ENCODE measurements at regions of chr11 and their contacts with region 1.

Region 1: DNA sequence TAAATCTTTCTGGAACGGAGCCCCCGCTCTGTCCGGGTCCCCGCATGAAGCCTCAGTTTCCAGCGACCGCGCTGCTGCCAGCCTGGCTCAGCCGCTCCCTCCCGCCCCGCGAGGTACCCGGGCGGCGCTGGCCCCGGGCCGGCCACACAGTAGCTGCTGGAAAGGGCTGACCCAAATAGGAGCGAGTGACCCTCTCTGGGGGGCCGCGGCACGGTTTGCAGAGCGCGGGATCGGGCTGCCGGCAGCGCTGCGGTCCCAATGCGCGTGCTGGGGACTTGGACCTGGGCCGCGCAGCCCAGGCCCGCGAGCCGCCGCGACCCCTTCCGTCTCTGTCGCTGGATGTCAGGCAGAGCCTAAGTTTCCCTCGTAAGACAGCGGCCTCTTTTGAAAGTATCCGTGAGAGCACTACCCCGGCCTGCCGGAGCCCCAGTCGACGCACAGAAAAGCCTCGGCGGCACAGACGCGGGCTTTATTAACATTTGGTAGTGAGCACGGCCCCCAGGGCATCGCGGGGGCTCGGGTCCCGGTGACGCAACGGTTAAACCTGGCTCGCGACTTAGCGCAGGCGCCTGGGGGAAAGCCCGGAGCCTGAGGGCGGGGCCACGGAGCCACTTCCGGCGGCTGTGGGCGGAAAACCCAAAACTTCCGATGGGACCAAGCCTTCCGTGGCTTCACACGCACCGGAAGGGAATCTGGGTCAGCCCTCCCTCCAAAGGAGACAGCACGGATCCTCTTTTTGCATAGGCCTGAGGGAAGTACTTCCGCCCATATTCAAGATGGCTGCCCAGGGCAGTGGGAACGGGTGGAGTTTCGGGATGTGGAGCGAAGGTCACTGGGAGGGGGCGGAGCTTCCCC is 14.9 kb downstream of the BAD start:
- DNase-seq: peak; percentile 86
- H3K4me3 ChIP-seq: peak overlapping the region; percentile 60 to 76
- H3K27ac ChIP-seq: peak overlapping the region; percentile 97 to 99
- H3K4me1 ChIP-seq: peaks cover 12 to 42% of the 10 kb centered on the region in 2 experiments; a peak in 2 of 4 replicates
- H3K27me3 ChIP-seq: no peaks in the 10 kb centered on the region
- CTCF ChIP-seq: 0 out of 2 replicates have a peak, but pooled peaks have one; percentile 14
- EP300 ChIP-seq: no peak; a peak in 1 of 4 replicates
- RAD21 ChIP-seq: peak; percentile 44

Region 2: DNA sequence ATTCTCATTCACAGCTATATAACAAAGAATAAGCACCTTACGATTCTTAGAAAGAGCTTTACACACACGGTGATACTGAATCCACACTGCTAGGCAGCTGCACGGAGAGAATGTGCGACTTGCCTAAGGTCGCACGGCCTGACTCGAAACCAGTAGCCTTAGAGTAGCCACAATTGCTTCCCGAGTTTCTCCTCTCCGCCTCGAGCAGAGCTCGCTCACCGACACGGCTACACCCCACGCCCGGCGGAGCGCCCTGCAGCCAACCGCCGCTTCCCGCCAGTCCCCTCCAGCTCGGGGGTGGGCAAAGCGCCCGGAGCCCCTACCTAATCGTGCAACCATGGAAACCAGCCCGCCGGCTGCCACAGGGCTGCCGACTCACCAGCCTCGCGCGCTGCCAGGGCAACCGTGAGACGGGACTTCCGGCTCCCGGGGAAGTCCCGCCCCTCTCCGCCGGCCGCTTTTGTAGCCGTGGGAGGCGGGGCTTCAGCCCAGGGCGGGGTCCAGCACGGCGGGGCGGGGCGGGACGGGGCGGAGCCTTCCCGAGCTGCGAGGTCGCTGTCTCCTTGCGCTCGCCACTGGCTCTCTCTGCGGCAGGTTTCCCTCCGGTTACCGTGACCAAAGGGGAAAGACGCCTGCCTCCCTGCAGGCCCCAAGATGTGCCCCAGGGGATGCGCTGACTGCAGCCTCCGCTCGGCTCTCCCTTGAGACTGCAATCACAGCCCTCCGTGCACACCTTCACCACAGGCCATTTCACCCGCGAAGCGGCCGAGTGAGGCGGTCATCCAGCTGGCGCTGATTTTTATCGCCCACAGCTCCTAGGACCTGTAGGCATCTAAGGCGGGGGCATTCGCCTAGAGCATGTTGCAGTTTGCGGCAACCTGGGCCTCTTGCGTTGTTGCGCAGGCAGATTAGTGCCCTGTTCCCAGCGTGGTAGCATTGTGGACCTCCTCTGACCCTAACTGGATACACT is 1563.4 kb before region 1 on chr11:
- CTCF ChIA-PET with region 1: no interaction called
- POLR2A ChIA-PET with region 1: no interaction called
- DNase-seq: peak; percentile 97
- H3K4me3 ChIP-seq: peak overlapping the region; percentile 67 to 70
- H3K27ac ChIP-seq: peak overlapping the region; percentile 84 to 93
- H3K4me1 ChIP-seq: peaks cover 22 to 45% of the 10 kb centered on the region in 2 experiments; a peak in 3 of 4 replicates
- H3K27me3 ChIP-seq: no peaks in the 10 kb centered on the region
- CTCF ChIP-seq: no peak
- EP300 ChIP-seq: no peak
- RAD21 ChIP-seq: no peak

Region 3: GRCh38 chr11:64204464-64204989 is 65.1 kb before region 1 on chr11:
- CTCF ChIA-PET with region 1: interaction called, 21 read pairs
- POLR2A ChIA-PET with region 1: interaction called, 5 read pairs
- DNase-seq: peak; percentile 89
- H3K4me3 ChIP-seq: no peak overlapping the region
- H3K27ac ChIP-seq: peak overlapping the region in 1 of 2 experiments; percentile 6; a peak in 1 of 4 replicates
- H3K4me1 ChIP-seq: peaks cover 4 to 27% of the 10 kb centered on the region in 2 experiments; a peak in 3 of 4 replicates
- H3K27me3 ChIP-seq: no peaks in the 10 kb centered on the region
- CTCF ChIP-seq: peak; percentile 85
- EP300 ChIP-seq: no peak
- RAD21 ChIP-seq: peak; percentile 84

Region 4: DNA sequence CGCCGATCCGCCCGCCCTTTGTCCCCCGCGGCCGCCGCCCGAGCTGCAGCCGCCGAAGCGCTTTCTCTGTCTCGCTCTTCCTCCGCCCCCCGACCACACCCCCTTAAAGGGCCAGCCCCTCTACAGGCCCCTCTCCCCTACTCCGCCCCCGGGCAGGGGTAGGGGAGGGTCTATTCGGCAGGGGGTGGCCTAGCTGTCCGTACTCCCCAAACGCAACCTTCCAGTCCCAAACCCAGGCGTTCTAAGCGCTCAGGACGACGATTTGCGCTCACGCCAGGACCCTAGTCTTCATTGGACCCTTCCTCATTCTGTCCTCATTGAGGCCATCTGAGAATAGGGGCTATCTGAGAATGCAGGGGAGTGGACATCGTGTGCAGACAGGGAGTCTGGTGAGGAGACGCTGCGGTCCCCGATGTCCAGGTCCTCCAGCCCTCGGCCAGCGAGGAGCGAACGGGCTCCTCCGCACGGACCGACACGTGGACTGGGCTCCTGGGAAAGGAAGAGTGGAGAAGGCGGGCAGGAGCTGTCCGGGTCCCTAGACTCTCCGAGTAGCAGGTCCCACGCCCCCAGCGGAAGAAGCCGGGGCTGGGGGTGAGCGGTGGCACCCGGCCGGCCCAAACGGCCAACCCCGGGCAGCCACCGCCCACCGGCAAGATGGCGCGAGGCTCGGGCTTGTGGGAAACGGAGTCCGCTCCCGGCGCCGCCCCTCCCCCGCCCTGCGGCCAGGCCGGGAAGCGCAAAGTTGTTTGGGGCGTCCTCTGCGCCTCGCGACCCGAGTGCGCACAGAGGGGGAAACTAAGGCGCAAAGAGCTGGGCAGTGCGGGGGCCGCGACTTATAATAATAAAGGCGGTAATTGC is 22.5 kb before region 1 on chr11 and contains the start of gene PPP1R14B:
- CTCF ChIA-PET with region 1: interaction called, 119 read pairs
- POLR2A ChIA-PET with region 1: interaction called, 112 read pairs
- DNase-seq: peak; percentile 95
- H3K4me3 ChIP-seq: peak within 1 kb of the TSS; percentile 92 to 98
- H3K27ac ChIP-seq: peak within 1 kb of the TSS; percentile 96 to 98
- H3K4me1 ChIP-seq: peaks cover 9 to 46% of the 10 kb centered on the region in 2 experiments; a peak in 2 of 4 replicates
- H3K27me3 ChIP-seq: no peaks in the 10 kb centered on the region
- CTCF ChIP-seq: no peak; the same call in 1 of the 2 replicates
- EP300 ChIP-seq: no peak
- RAD21 ChIP-seq: no peak
- polyA plus RNA-seq, gene PPP1R14B: 373 and 523 TPM in 2 replicates

Region 5: DNA sequence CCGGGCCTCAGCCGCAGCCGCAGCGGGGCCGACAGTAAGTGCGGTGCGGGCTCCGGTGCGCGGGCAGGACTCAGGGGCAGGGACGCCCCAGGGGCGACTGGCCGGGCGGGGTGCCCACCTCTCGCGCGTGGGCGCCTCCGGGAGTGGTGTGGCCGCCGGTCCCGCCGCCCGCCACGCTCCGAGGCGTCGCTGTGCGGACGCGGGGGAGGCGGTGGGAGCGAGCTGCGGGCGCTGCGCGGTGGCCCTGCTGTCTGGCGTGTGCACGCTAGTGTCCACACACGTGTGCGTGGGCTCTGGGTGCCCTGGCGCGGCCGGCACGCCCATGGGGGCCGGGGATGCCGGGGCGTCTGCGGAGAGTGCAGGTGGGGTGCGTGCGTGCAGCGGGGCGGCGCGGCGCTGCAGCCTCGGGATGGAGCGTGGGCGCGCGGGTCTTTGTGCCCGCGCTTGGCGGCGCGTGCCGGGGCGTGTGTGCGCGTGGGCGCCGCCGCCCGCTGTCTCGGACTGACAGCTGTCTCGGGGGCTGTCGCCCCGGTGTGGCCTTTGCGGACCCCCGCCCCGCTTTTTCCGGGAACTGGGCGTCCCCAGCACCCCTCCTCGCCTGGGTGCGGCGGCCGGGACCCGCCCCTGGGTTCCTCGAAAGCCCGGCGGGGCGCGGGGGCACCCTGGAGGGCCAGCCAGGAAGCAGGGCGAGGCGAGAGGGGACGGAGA is 22.3 kb after region 1 on chr11:
- CTCF ChIA-PET with region 1: interaction called, 46 read pairs
- POLR2A ChIA-PET with region 1: interaction called, 3 read pairs
- DNase-seq: peak; percentile 68
- H3K4me3 ChIP-seq: peak overlapping the region; percentile 39 to 48; a peak in 3 of 4 replicates
- H3K27ac ChIP-seq: no peak overlapping the region
- H3K4me1 ChIP-seq: peaks cover 0 to 11% of the 10 kb centered on the region in 2 experiments; a peak in 1 of 4 replicates
- H3K27me3 ChIP-seq: peaks cover 20% of the 10 kb centered on the region
- CTCF ChIP-seq: no peak
- EP300 ChIP-seq: no peak
- RAD21 ChIP-seq: no peak

Region 6: DNA sequence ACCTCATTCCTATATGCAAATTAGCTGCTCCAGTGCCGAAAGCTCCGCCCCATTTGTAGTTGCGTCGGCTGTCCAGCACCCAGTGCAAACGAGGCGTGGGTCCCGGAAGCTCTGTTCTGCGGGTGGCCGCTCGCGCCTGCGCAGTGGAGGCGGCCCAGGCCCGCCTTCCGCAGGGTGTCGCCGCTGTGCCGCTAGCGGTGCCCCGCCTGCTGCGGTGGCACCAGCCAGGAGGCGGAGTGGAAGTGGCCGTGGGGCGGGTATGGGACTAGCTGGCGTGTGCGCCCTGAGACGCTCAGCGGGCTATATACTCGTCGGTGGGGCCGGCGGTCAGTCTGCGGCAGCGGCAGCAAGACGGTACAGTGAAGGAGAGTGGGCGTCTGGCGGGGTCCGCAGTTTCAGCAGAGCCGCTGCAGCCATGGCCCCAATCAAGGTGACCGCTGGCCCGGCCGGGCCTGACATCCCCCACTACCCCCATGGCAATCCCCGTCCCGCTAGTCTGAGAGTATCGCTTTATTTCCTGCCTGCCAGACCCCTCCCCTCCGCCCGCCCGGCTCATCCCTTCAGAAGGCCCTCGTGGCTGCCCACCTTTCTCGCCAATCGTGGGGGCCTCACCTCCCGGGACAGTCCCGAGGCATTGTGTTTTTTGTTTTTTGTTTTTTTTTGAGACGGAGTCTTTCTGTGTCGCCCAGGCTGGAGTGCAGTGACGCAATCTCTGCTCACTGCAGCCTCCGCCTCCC is 48.5 kb after region 1 on chr11 and contains the start of gene PRDX5:
- CTCF ChIA-PET with region 1: interaction called, 10 read pairs
- POLR2A ChIA-PET with region 1: interaction called, 14 read pairs
- DNase-seq: peak; percentile 97
- H3K4me3 ChIP-seq: peak within 1 kb of the TSS; percentile 70 to 98
- H3K27ac ChIP-seq: peak within 1 kb of the TSS; percentile 97 to 100
- H3K4me1 ChIP-seq: peaks cover 0 to 15% of the 10 kb centered on the region in 2 experiments; a peak in 2 of 4 replicates
- H3K27me3 ChIP-seq: no peaks in the 10 kb centered on the region
- CTCF ChIP-seq: peak; percentile 33; the same call in 1 of the 2 replicates
- EP300 ChIP-seq: 0 out of 4 replicates have a peak, but pooled peaks of 1 of the 2 experiments have one; percentile 4
- RAD21 ChIP-seq: peak; percentile 55
- polyA plus RNA-seq, gene PRDX5: 875 and 1,000 TPM in 2 replicates

Measured in SK-N-SH (cell line).